A549 (cell line): ENCODE measurements at regions of chr12 and their contacts with region 1.

Region 1: GRCh38 chr12:7933255-7933729 is 2.7 kb downstream of the SLC2A3 start:
- DNase-seq: peak; percentile 90 to 94
- ATAC-seq: peak; percentile 93 to 97
- H3K4me3 ChIP-seq: peak overlapping the region; percentile 51; the same call in 2 of the 3 replicates
- H3K27ac ChIP-seq: peak overlapping the region; percentile 31 to 79; a peak in 5 of 6 replicates
- H3K4me1 ChIP-seq: peaks cover 14% of the 10 kb centered on the region
- CTCF ChIP-seq: peak; percentile 87
- EP300 ChIP-seq: no peak
- POLR2A ChIP-seq: no peak
- RAD21 ChIP-seq: peak; percentile 80 to 83

Region 2: GRCh38 chr12:7638760-7639555 is 294.3 kb before region 1 on chr12:
- CTCF ChIA-PET with region 1: no interaction called
- POLR2A ChIA-PET with region 1: no interaction called
- DNase-seq: peak; percentile 63 to 83
- ATAC-seq: peak; percentile 96 to 97
- H3K4me3 ChIP-seq: no peak overlapping the region
- H3K27ac ChIP-seq: no peak overlapping the region
- H3K4me1 ChIP-seq: no peaks in the 10 kb centered on the region
- CTCF ChIP-seq: peak; percentile 91
- EP300 ChIP-seq: no peak
- POLR2A ChIP-seq: no peak
- RAD21 ChIP-seq: peak; percentile 95 to 96

Region 3: DNA sequence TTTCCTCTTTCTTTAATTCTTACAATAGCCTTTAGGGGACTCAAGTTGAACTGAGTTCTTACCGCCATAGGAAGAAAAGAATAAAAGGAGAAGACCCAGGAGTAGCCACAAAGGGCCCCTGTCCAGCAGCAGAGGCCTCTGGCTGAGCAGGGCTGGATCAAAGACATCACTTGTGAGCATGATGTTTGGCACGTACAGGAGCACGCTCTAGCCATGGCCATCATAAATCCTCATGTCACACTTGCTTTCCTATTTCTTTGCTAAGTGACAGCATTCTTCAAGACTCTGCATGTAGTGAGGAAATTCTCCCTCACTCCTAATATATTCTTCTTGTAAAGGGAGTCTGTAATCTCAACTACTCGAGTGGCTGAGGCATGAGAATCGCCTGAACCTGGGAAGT is 201.8 kb before region 1 on chr12:
- CTCF ChIA-PET with region 1: no interaction called
- POLR2A ChIA-PET with region 1: no interaction called
- DNase-seq: no peak
- ATAC-seq: peak in 1 of 2 experiments; percentile 39; a peak in 2 of 6 replicates
- H3K4me3 ChIP-seq: no peak overlapping the region
- H3K27ac ChIP-seq: no peak overlapping the region
- H3K4me1 ChIP-seq: no peaks in the 10 kb centered on the region
- CTCF ChIP-seq: no peak
- EP300 ChIP-seq: no peak
- POLR2A ChIP-seq: no peak
- RAD21 ChIP-seq: no peak

Region 4: DNA sequence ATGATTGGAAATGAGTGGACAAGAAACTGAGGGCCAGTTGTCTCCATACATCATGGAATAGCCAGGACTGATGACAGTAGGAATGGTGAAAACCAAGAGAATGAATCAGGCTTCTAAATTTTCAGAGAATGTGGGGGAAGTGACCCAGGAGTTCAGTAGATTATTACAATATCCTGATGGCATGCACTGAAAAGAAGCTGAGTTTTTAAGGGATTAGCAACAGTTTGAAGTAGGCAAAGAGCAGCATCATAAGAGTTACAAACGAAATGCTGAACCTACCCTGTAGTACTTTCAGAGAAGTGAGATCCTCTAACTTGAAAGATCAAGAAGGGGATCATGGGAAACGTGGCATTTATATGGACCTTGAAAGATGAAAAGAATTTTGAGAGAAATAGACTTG is 73.7 kb before region 1 on chr12:
- CTCF ChIA-PET with region 1: interaction called, 42 read pairs
- POLR2A ChIA-PET with region 1: no interaction called
- DNase-seq: no peak
- ATAC-seq: peak in 1 of 2 experiments; percentile 17; a peak in 3 of 6 replicates
- H3K4me3 ChIP-seq: no peak overlapping the region
- H3K27ac ChIP-seq: peak overlapping the region in 1 of 2 experiments; percentile 86; a peak in 2 of 6 replicates
- H3K4me1 ChIP-seq: peaks cover 14% of the 10 kb centered on the region
- CTCF ChIP-seq: no peak
- EP300 ChIP-seq: no peak
- POLR2A ChIP-seq: no peak
- RAD21 ChIP-seq: no peak

Region 5: DNA sequence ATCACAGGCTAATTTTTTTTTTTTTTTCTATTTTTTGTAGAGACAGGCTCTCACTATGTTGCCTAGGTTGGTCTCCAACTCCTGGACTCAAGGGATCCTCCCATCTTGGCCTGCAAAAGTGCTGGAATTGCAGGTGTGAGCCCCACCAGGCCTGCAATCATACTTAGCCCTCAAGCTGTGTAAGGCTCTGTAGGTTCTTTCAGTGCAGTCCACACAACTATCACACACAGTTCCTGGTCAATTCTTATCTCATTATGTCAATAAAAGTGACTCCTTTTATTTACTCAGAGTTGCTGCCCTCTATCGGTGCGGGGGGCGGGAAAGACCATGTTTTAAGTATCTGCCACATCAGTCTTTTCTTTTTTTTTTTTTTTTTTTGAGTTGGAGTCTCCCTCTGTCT is 26.3 kb before region 1 on chr12:
- CTCF ChIA-PET with region 1: interaction called, 37 read pairs
- POLR2A ChIA-PET with region 1: interaction called, 4 read pairs
- DNase-seq: peak; percentile 90 to 93
- ATAC-seq: peak; percentile 97 to 99
- H3K4me3 ChIP-seq: no peak overlapping the region
- H3K27ac ChIP-seq: peak overlapping the region; percentile 76 to 81
- H3K4me1 ChIP-seq: peaks cover 36% of the 10 kb centered on the region
- CTCF ChIP-seq: peak; percentile 53
- EP300 ChIP-seq: no peak
- POLR2A ChIP-seq: no peak
- RAD21 ChIP-seq: peak; percentile 59 to 60; a peak in 4 of 5 replicates

Region 6: GRCh38 chr12:7959701-7960121 is 26.4 kb after region 1 on chr12:
- CTCF ChIA-PET with region 1: interaction called, 66 read pairs
- POLR2A ChIA-PET with region 1: interaction called, 127 read pairs
- DNase-seq: no peak
- ATAC-seq: peak in 1 of 2 experiments; percentile 9; a peak in 1 of 6 replicates
- H3K4me3 ChIP-seq: no peak overlapping the region; the same call in 2 of the 3 replicates
- H3K27ac ChIP-seq: peak overlapping the region; percentile 71 to 81; a peak in 5 of 6 replicates
- H3K4me1 ChIP-seq: peaks cover 20% of the 10 kb centered on the region
- CTCF ChIP-seq: no peak
- EP300 ChIP-seq: no peak
- POLR2A ChIP-seq: no peak
- RAD21 ChIP-seq: no peak

Region 7: GRCh38 chr12:7995266-7995963 is 62.1 kb after region 1 on chr12:
- CTCF ChIA-PET with region 1: interaction called, 38 read pairs
- POLR2A ChIA-PET with region 1: interaction called, 10 read pairs
- DNase-seq: peak; percentile 52 to 90
- ATAC-seq: peak; percentile 100
- H3K4me3 ChIP-seq: no peak overlapping the region
- H3K27ac ChIP-seq: peak overlapping the region; percentile 4 to 73; a peak in 3 of 6 replicates
- H3K4me1 ChIP-seq: peaks cover 21% of the 10 kb centered on the region
- CTCF ChIP-seq: peak; percentile 83
- EP300 ChIP-seq: no peak
- POLR2A ChIP-seq: no peak
- RAD21 ChIP-seq: peak; percentile 91 to 92